Activated B cell treated with CpG ODN at 0.5 μM for 24 hours (primary cell): ENCODE measurements at regions of chr3 and their contacts with region 1.

Region 1: GRCh38 chr3:104316118-104316517 is 1050.6 kb upstream of the ALCAM start:
- DNase-seq: no peak
- ATAC-seq: no peak
- H3K4me3 Mint-ChIP-seq: no peak overlapping the region
- H3K27ac Mint-ChIP-seq: no peak overlapping the region
- H3K4me1 Mint-ChIP-seq: no peaks in the 10 kb centered on the region
- H3K27me3 Mint-ChIP-seq: no peaks in the 10 kb centered on the region
- CTCF ChIP-seq: no peak

Region 2: GRCh38 chr3:104180906-104181305 is 135.2 kb before region 1 on chr3:
- CTCF ChIA-PET with region 1: no interaction called
- POLR2A ChIA-PET with region 1: no interaction called
- intact Hi-C with region 1: no loop called
- DNase-seq: no peak
- ATAC-seq: no peak
- H3K4me3 Mint-ChIP-seq: no peak overlapping the region
- H3K27ac Mint-ChIP-seq: no peak overlapping the region
- H3K4me1 Mint-ChIP-seq: no peaks in the 10 kb centered on the region
- H3K27me3 Mint-ChIP-seq: no peaks in the 10 kb centered on the region
- CTCF ChIP-seq: no peak

Region 3: GRCh38 chr3:104257486-104257885 is 58.6 kb before region 1 on chr3:
- CTCF ChIA-PET with region 1: no interaction called
- POLR2A ChIA-PET with region 1: no interaction called
- intact Hi-C with region 1: loop called (anchors 10 kb)
- DNase-seq: no peak
- ATAC-seq: no peak
- H3K4me3 Mint-ChIP-seq: no peak overlapping the region
- H3K27ac Mint-ChIP-seq: no peak overlapping the region
- H3K4me1 Mint-ChIP-seq: no peaks in the 10 kb centered on the region
- H3K27me3 Mint-ChIP-seq: no peaks in the 10 kb centered on the region
- CTCF ChIP-seq: no peak

Region 4: GRCh38 chr3:104349836-104350235 is 33.7 kb after region 1 on chr3:
- CTCF ChIA-PET with region 1: no interaction called
- POLR2A ChIA-PET with region 1: no interaction called
- intact Hi-C with region 1: no loop called
- DNase-seq: no peak
- ATAC-seq: no peak
- H3K4me3 Mint-ChIP-seq: no peak overlapping the region
- H3K27ac Mint-ChIP-seq: no peak overlapping the region
- H3K4me1 Mint-ChIP-seq: no peaks in the 10 kb centered on the region
- H3K27me3 Mint-ChIP-seq: no peaks in the 10 kb centered on the region
- CTCF ChIP-seq: no peak